ENCODE measurements at regions of chr18 and their contacts with region 1.

Region 1: DNA sequence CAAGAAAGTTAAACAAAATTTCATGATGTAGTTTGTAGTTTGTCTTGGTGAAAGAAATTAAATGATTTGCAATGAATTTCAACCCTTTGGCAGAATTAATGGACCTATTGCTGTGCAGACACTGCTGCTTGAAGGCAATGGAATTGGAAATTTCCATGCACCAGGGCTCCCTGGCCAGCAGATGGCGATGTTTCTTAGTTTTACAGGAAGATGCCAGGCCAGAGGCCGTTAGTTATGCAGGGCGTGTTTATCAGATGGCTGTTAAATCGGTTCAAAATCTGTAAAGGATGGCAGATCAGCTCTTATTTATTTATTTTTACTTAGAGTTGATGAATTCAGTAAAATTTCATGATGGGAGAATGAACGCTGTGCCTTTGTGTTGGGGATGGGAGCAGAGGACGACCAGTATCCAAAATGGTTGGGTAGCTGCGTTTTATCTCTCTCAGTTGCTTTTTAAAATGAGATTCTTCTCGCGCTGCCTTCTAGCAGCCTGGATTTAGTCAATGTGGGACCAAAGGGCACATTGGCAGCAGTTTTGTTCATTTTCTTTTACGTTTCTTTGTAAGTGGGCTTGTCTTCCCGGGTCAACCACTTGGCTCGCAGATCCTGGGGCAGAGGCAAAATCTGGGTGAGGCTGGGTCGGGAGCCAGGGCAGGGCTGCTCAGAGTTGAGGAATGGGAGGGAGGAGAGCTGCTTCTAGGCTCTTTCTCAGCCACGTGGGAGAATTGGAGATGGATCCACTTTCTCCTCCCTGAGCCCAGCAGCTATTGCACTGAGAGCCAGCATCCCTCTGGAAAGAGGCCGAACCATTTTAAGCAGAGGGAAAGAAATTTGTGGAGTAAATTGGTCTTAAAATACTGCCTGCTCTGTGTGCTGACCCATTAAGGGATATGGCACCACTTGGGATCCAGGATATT is 344.0 kb downstream of the PIK3C3 start:
- DNase-seq: peak; percentile 71 to 98 (median 90)

Region 2: GRCh38 chr18:43265465-43265864 is 966.4 kb after region 1 on chr18:
- intact Hi-C with region 1: loop called (anchors 5 kb)
- DNase-seq: no peak

Measured in head of caudate nucleus (tissue), 42 donors.